Common myeloid progenitor, CD34-positive (primary cell): ENCODE measurements at regions of chr11 and their contacts with region 1.

Region 1: DNA sequence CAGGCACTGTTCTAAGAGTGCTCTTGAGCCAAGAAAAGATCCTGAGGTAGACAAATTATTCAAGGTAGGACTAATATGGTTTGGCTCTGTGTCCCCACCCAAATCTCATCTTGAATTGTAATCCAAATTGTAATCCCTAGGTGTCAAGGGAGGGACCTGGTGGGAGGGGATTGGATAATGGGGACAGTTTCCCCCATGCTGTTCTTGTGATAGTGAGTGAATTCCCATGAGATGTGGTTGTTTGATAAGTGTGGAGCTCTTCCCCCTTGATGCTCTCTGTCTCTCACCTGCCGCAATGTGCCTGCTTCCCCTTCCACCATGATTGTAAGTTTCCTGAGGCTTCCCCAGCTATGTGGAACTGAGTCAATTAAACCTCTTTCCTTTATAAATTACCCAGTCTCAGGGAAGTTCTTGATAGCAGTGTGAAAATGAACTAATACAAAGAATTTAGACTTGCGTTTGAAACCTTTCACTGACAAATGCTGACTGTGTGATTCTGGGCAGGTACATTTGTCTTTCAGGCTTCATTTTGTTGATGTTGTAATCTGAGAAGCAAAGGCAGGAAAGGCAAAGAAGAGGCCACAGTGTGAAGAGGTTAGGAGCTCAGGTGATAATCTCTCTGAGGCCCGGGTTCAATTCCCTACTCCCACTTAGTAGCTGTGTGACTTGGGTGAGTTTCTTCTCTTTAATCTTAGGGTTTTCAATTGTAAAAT is 115.8 kb upstream of the PAX6 start:
- DNase-seq: no peak
- H3K4me3 ChIP-seq: no peak overlapping the region
- H3K27ac ChIP-seq: no peak overlapping the region
- H3K4me1 ChIP-seq: no peaks in the 10 kb centered on the region
- H3K27me3 ChIP-seq: peaks cover 0 to 7% (median 6%) of the 10 kb centered on the region in 5 experiments

Region 2: GRCh38 chr11:31810779-31811647 is 116.0 kb before region 1 on chr11 and contains the start of gene PAX6:
- CTCF ChIA-PET with region 1: no interaction called
- POLR2A ChIA-PET with region 1: interaction called, 11 read pairs
- DNase-seq: peak; percentile 91 to 95 (median 94)
- H3K4me3 ChIP-seq: peak within 1 kb of the TSS in 5 of 7 experiments; percentile 14 to 62 (median 26)
- H3K27ac ChIP-seq: no peak within 1 kb of the TSS
- H3K4me1 ChIP-seq: peaks cover 5 to 58% (median 40%) of the 10 kb centered on the region in 4 experiments
- H3K27me3 ChIP-seq: peaks cover 19 to 100% (median 76%) of the 10 kb centered on the region in 5 experiments

Region 3: GRCh38 chr11:31913985-31914384 is 13.0 kb before region 1 on chr11:
- CTCF ChIA-PET with region 1: no interaction called
- POLR2A ChIA-PET with region 1: no interaction called
- DNase-seq: no peak
- H3K4me3 ChIP-seq: no peak overlapping the region
- H3K27ac ChIP-seq: no peak overlapping the region
- H3K4me1 ChIP-seq: no peaks in the 10 kb centered on the region
- H3K27me3 ChIP-seq: peaks cover 0 to 4% (median 0%) of the 10 kb centered on the region in 5 experiments